T-cell (primary cell): ENCODE measurements at regions of chr1 and their contacts with region 1.

Region 1: DNA sequence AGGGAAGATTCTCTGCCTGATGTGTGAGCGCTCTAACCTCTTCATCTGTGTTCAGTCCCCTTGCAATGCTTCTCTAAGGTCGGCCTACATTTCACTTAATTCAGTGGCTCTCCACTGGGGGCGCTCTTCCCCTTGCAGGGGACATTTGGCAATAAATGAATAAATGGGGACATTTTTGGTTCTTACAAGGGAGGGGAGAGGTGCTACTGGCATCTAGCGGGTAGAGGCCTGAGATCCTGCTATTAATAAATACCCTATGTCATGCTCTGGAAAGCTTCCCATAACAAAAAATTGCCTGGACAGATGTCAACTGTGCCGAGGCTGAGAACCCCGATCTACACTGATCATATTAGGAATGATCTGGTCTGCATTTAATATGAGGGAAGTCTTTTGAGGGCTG is 25.9 kb upstream of the DNAJC11 start:
- DNase-seq: peak in 34 of 35 experiments; percentile 7 to 69 (median 38)
- ATAC-seq: no peak
- H3K4me3 ChIP-seq: no peak overlapping the region
- H3K4me3 Mint-ChIP-seq: no peak overlapping the region
- H3K27ac ChIP-seq: no peak overlapping the region
- H3K27ac Mint-ChIP-seq: no peak overlapping the region
- H3K4me1 ChIP-seq: no peaks in the 10 kb centered on the region
- H3K4me1 Mint-ChIP-seq: no peaks in the 10 kb centered on the region
- H3K27me3 ChIP-seq: peaks cover 0 to 16% of the 10 kb centered on the region in 2 experiments
- H3K27me3 Mint-ChIP-seq: peaks cover 5 to 19% of the 10 kb centered on the region in 2 donors

Region 2: DNA sequence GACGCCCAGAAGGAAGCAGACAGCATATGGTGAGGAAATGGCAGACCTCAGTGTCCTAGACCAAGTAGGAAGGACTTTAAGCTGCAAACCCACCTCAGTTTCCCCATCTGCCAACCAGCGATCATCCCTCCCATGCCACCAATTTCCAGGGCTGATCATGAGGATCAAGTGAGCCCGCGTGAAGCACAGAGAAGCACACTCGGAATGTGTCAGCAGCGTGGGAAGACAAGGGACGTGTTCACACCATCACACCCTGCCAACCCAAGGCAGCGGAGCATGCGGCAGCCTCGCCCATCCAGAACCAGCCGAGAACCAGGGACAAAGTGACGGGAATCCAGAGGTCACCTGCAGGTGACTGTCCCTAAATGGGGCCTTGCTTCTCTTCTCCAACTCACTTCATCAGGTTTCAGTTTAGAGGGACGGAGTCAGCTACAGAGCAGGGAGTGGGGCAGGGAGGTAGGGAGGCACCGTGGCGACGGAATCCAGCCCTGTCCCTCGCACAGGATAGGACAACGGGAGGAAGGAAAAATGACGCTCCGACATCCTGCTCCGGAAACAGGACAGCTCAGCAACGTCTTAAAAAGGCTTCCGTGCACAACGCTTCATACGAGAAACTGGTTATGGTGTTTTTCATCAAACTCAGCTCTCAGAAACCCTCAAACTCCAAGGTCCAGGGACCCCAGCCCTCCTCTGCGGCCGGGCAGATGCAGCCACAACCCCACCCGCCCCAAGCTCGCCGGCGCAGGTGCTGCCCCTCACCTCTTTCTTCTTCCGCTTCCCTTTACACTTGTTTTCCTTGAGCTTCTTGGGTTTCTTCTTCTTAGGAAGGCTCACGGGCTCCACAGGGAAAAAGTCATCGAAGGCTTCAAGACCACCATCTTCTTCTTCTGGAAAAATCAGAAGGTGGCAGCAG is 559.9 kb before region 1 on chr1:
- CTCF ChIA-PET with region 1: interaction called in 1 of 2 experiments, 10 read pairs
- POLR2A ChIA-PET with region 1: no interaction called
- DNase-seq: no peak
- ATAC-seq: no peak
- H3K4me3 ChIP-seq: no peak overlapping the region
- H3K4me3 Mint-ChIP-seq: no peak overlapping the region
- H3K27ac ChIP-seq: no peak overlapping the region
- H3K27ac Mint-ChIP-seq: no peak overlapping the region
- H3K4me1 ChIP-seq: no peaks in the 10 kb centered on the region
- H3K4me1 Mint-ChIP-seq: no peaks in the 10 kb centered on the region
- H3K27me3 ChIP-seq: peaks cover 0 to 58% of the 10 kb centered on the region in 2 experiments
- H3K27me3 Mint-ChIP-seq: peaks cover 3 to 38% of the 10 kb centered on the region in 2 donors

Region 3: DNA sequence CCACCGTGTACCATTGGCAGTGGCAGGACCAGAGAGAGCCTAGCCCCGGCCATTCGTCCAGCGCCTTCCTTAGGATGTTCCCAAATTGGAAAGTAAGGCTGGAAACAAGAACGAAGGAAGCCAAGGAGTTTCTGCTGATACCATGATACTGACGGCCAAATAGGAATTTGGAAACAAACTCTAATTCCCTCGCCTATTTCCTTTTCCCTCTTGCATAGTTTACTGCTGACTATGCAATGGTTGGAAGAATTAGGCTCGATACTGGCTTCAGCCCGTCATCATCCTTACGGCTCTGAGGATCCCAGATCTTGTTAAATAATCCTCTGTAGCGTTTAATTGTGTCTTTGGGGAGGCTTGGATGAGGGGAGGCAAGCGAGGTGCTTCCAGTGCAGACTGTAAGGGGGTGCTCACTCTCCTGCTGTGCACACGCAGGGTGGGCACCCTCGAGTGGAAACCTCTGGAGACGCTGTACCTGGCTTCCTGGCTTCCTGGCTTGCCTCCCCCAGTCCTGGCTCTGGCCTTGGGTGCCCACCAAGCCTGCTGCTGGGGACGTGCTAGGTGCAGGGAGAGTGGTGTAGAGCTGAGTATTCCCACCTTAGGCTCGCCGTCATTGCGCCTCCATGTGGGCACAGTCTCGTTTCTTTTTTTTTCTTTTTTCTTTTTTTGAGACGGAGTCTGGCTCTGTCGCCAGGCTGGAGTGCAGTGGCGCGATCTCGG is 30.3 kb after region 1 on chr1:
- CTCF ChIA-PET with region 1: no interaction called
- POLR2A ChIA-PET with region 1: no interaction called
- DNase-seq: no peak
- ATAC-seq: no peak
- H3K4me3 ChIP-seq: no peak overlapping the region
- H3K4me3 Mint-ChIP-seq: no peak overlapping the region
- H3K27ac ChIP-seq: no peak overlapping the region
- H3K27ac Mint-ChIP-seq: no peak overlapping the region
- H3K4me1 ChIP-seq: no peaks in the 10 kb centered on the region
- H3K4me1 Mint-ChIP-seq: no peaks in the 10 kb centered on the region
- H3K27me3 ChIP-seq: peaks cover 0 to 9% of the 10 kb centered on the region in 2 experiments
- H3K27me3 Mint-ChIP-seq: peaks cover 22 to 24% of the 10 kb centered on the region in 2 donors

Region 4: DNA sequence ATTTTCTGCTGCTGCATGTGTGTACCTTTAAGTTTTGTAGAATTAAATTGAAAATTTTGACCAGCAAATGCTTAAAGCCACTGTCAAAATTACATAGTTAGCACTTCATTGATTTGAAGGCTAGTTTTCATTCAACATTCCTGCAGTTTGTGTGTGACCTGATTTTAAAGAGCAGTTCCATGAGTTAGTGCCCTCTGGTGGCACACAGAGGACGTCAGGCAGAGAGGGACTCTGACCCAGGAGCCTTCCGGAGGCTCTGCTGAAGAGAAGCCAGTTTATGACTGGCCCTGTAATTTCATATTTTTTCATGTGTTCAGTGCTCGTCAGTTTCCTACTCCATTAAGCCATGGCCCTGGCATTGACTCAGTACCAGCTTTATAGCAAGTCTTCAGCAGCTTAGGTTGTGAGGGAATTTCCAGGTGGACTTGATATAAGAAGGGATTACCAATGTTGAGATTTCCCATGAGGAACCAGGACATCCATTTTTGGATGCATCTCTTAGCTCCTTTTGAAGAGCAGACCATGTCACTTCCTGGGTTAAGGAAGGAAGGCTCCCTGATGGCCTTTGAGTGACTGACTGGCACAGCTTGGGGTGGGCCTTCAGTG is 162.4 kb after region 1 on chr1:
- CTCF ChIA-PET with region 1: interaction called in 1 of 2 experiments, 14 read pairs
- POLR2A ChIA-PET with region 1: no interaction called
- DNase-seq: peak in 27 of 35 experiments; percentile 5 to 57 (median 16)
- ATAC-seq: peak in 2 of 4 experiments; percentile 35 to 38
- H3K4me3 ChIP-seq: no peak overlapping the region
- H3K4me3 Mint-ChIP-seq: no peak overlapping the region
- H3K27ac ChIP-seq: no peak overlapping the region
- H3K27ac Mint-ChIP-seq: no peak overlapping the region
- H3K4me1 ChIP-seq: no peaks in the 10 kb centered on the region
- H3K4me1 Mint-ChIP-seq: no peaks in the 10 kb centered on the region
- H3K27me3 ChIP-seq: no peaks in the 10 kb centered on the region
- H3K27me3 Mint-ChIP-seq: no peaks in the 10 kb centered on the region